ENCODE measurements at regions of chr18 and their contacts with region 1.

Region 1: DNA sequence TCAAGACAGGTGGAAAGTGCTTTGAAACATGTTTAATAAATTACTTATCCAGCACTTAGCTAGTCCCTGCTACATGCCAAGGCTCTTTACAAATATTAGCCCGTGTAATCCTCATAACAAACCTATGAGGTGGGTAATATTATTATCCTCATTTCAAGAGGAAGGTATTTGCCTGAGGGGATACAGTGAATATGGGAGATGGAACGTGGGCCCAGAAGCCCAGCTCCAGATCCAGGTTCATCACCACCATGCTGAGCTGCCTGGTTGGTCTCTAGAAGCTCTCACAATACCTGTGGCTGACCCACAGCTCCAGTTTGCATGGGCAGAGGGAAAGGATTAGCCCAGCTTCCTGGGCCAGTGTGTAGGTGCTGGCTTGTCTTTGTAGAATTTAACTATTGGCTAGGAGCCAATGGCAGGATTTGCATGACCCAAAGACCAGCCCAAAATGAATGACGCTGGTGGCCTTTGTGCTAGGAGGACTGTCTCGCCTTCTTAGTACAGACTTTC is 61.6 kb upstream of the ATP8B1 start:
- DNase-seq: no peak
- H3K4me3 ChIP-seq: no peak overlapping the region
- H3K27ac ChIP-seq: no peak overlapping the region
- H3K4me1 ChIP-seq: peaks cover 18% of the 10 kb centered on the region
- H3K27me3 ChIP-seq: no peaks in the 10 kb centered on the region
- CTCF ChIP-seq: no peak

Region 2: GRCh38 chr18:57550510-57550909 is 314.2 kb before region 1 on chr18:
- CTCF ChIA-PET with region 1: no interaction called
- POLR2A ChIA-PET with region 1: no interaction called
- intact Hi-C with region 1: no loop called
- DNase-seq: no peak
- H3K4me3 ChIP-seq: no peak overlapping the region
- H3K27ac ChIP-seq: no peak overlapping the region
- H3K4me1 ChIP-seq: no peaks in the 10 kb centered on the region
- H3K27me3 ChIP-seq: no peaks in the 10 kb centered on the region
- CTCF ChIP-seq: no peak

Region 3: GRCh38 chr18:57819671-57820460 is 44.8 kb before region 1 on chr18:
- CTCF ChIA-PET with region 1: no interaction called
- POLR2A ChIA-PET with region 1: no interaction called
- intact Hi-C with region 1: loop called (anchors 5 kb)
- DNase-seq: peak; percentile 62
- H3K4me3 ChIP-seq: no peak overlapping the region
- H3K27ac ChIP-seq: no peak overlapping the region
- H3K4me1 ChIP-seq: peaks cover 4% of the 10 kb centered on the region
- H3K27me3 ChIP-seq: no peaks in the 10 kb centered on the region
- CTCF ChIP-seq: no peak

Region 4: GRCh38 chr18:57881818-57882413 is 17.2 kb after region 1 on chr18:
- CTCF ChIA-PET with region 1: no interaction called
- POLR2A ChIA-PET with region 1: no interaction called
- intact Hi-C with region 1: no loop called
- DNase-seq: peak; percentile 87
- H3K4me3 ChIP-seq: no peak overlapping the region
- H3K27ac ChIP-seq: no peak overlapping the region
- H3K4me1 ChIP-seq: no peaks in the 10 kb centered on the region
- H3K27me3 ChIP-seq: no peaks in the 10 kb centered on the region
- CTCF ChIP-seq: peak; percentile 95